Aorta (tissue), 5 donors: ENCODE measurements at regions of chr1 and their contacts with region 1.

Region 1: DNA sequence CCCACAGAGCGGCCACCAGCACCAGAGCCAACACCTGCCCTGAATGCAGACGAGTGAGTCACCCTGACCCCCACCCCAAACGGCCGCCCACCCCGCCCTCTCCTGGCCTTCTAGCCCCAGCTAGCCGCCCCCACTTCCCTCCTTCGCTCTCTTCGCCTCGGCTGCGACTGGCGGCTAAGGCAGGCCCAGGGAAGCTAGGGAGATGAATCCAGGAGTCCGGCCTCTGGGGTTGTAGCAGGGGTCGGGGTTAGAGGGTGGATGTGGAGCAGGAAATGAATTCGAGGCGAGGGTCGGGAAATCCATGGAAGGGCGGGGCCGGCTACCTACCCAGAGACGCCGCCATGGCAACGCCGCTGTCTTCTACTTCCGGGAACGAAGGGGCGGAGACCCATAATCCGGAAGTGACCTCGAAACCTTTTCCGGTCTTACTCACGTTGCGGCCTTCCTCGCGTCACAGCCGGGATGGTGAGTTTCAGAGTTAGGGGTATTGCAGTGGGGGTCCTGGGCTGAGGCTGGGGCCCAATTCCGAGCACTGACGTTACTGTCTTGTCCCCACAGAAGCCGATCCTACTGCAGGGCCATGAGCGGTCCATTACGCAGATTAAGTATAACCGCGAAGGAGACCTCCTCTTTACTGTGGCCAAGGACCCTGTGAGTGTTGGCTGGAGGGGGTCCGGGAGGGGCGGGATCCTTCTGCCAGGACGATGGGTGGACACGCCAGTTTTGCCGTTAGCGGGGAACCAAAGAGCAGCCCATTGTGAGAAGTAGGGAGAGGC is at the starts of genes EIF3I and TMEM234:
- DNase-seq: peak; percentile 96 to 97
- ATAC-seq: peak; percentile 95
- H3K4me3 ChIP-seq: peak within 1 kb of the TSS; percentile 85 to 88
- H3K27ac ChIP-seq: peak within 1 kb of the TSS in 1 of 2 donors; percentile 84
- H3K4me1 ChIP-seq: peaks cover 2 to 3% of the 10 kb centered on the region in 2 donors
- H3K27me3 ChIP-seq: no peaks in the 10 kb centered on the region
- total RNA-seq, gene EIF3I: 102 to 108 TPM
- total RNA-seq, gene TMEM234: 18.0 to 24.3 TPM

Region 2: GRCh38 chr1:32107742-32108661 is 114.2 kb before region 1 on chr1 and contains the start of gene KPNA6:
- intact Hi-C with region 1: no loop called
- DNase-seq: peak; percentile 93 to 94
- ATAC-seq: peak; percentile 96
- H3K4me3 ChIP-seq: peak within 1 kb of the TSS; percentile 62 to 95
- H3K27ac ChIP-seq: peak within 1 kb of the TSS; percentile 19 to 41
- H3K4me1 ChIP-seq: peaks cover 0 to 7% of the 10 kb centered on the region in 2 donors
- H3K27me3 ChIP-seq: no peaks in the 10 kb centered on the region
- total RNA-seq, gene KPNA6: 58.4 to 66.2 TPM

Region 3: DNA sequence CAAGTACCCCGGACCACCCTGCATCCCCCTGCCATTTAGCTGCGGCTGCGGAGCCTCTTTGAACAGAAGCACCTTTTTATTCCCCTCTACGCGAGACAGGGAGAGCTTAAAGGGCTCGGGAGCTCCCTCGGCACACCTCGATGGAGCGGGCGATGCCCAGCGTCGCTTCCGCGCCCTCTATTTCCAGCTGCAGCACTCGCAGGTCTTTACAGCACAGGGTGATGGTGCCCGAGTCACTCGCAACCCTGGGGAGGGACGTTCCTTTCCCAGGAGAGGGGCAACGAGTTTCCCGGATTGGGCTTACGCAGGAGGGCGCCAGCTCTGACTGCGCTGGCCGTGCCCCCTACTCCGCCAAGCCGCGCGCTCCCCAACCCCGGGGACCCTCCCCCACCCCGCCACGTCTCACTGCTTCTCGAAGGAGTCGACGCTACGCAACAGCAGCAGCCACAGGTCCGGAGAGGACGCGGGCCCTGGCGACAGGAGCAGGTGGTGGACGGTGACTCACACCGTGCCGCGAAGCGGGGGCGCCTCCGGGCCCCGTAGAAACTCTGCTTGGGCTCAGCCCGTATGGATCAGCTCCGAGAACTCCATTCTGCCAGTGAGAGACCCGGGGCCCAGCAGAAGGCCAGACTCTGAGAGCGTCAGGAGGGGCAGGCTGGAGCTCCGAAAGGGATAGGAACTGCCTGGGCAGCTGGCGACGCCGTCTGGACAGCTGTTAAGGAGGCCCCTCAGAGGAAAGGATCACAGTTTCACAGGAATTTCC is 19.0 kb after region 1 on chr1:
- intact Hi-C with region 1: loop called in 1 of 2 experiments (anchors 1 kb)
- DNase-seq: peak; percentile 78 to 91
- ATAC-seq: peak; percentile 77
- H3K4me3 ChIP-seq: peak overlapping the region; percentile 39 to 40
- H3K27ac ChIP-seq: peak overlapping the region; percentile 31 to 59
- H3K4me1 ChIP-seq: no peaks in the 10 kb centered on the region
- H3K27me3 ChIP-seq: no peaks in the 10 kb centered on the region